CD4-positive, alpha-beta T cell (primary cell): ENCODE measurements at regions of chr18 and their contacts with region 1.

Region 1: DNA sequence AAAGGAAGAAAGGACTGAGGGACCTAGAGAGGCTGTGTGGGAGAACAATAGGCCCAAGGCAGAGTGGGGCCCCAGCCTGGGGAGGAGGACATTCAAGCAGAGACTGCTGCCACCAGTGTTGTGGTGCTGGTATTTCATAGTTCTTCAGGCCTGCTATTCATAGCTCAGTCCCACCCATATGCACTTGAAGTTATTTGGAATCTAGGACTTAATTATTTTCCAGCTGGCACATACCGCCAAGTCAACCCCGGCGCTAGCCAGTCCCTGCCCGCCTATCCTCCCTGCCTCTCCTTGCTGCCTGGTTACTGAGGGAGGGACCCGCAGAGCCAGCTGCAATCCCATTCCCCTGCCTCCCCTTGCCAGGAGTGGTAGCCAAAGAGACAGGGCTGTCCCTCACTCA is 141.2 kb downstream of the CABLES1 start:
- DNase-seq: no peak
- ATAC-seq: no peak
- H3K4me3 ChIP-seq: no peak overlapping the region
- H3K4me3 Mint-ChIP-seq: no peak overlapping the region
- H3K27ac ChIP-seq: no peak overlapping the region
- H3K27ac Mint-ChIP-seq: no peak overlapping the region
- H3K4me1 ChIP-seq: no peaks in the 10 kb centered on the region
- H3K4me1 Mint-ChIP-seq: no peaks in the 10 kb centered on the region
- H3K27me3 ChIP-seq: no peaks in the 10 kb centered on the region
- H3K27me3 Mint-ChIP-seq: no peaks in the 10 kb centered on the region
- CTCF ChIP-seq: no peak

Region 2: DNA sequence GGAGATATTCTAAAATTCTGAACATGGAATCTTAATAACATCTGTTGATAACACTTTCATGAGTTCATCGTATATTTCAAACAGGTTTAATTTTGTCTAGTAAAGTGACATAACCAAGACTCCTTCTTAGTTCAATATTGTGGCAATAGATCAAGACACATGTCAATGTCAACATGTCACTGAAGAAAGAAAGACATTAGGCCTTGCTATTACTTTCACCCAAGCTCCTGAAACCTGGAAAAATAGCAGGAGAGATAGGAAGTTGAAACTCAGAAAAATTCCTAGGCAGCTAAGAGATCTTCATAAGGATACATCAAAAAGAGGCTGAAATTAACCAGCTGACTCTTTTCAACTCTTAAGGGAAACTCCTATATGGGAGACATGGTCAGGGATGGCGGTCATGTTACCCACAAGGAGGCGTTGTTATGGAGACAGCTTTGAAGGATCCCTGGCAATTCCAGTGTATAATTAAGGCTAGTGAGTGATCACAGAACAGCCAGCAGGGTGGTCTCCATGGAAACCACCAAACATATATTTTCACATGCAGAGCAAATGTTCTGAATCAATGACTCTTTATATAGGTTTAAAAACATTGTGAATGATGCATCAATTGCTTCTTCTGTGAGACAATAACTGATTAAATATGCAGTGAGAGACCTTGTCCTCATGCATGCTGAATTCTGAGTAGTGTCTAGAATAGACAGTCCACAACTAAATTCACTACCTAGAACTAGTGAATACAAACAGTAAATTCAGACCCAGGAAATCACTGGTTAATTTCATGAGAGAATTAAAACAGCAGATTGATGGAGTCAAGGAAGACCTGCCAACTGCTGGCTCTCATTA is 61.4 kb after region 1 on chr18:
- CTCF ChIA-PET with region 1: no interaction called
- POLR2A ChIA-PET with region 1: no interaction called
- intact Hi-C with region 1: loop called in 1 of 2 experiments (anchors 10 kb)
- DNase-seq: no peak
- ATAC-seq: no peak
- H3K4me3 ChIP-seq: no peak overlapping the region
- H3K4me3 Mint-ChIP-seq: no peak overlapping the region
- H3K27ac ChIP-seq: no peak overlapping the region
- H3K27ac Mint-ChIP-seq: no peak overlapping the region
- H3K4me1 ChIP-seq: no peaks in the 10 kb centered on the region
- H3K4me1 Mint-ChIP-seq: no peaks in the 10 kb centered on the region
- H3K27me3 ChIP-seq: no peaks in the 10 kb centered on the region
- H3K27me3 Mint-ChIP-seq: no peaks in the 10 kb centered on the region
- CTCF ChIP-seq: no peak

Region 3: GRCh38 chr18:23515911-23516546 is 239.6 kb after region 1 on chr18:
- CTCF ChIA-PET with region 1: no interaction called
- POLR2A ChIA-PET with region 1: no interaction called
- intact Hi-C with region 1: no loop called
- DNase-seq: peak; percentile 64 to 88 (median 66)
- ATAC-seq: peak; percentile 99
- H3K4me3 ChIP-seq: no peak overlapping the region
- H3K4me3 Mint-ChIP-seq: no peak overlapping the region
- H3K27ac ChIP-seq: no peak overlapping the region
- H3K27ac Mint-ChIP-seq: peak overlapping the region; percentile 28
- H3K4me1 ChIP-seq: peaks cover 10% of the 10 kb centered on the region
- H3K4me1 Mint-ChIP-seq: peaks cover 24% of the 10 kb centered on the region
- H3K27me3 ChIP-seq: no peaks in the 10 kb centered on the region
- H3K27me3 Mint-ChIP-seq: no peaks in the 10 kb centered on the region
- CTCF ChIP-seq: peak; percentile 87